CD8-positive, alpha-beta T cell (primary cell): ENCODE measurements at regions of chr21 and their contacts with region 1.

Region 1: DNA sequence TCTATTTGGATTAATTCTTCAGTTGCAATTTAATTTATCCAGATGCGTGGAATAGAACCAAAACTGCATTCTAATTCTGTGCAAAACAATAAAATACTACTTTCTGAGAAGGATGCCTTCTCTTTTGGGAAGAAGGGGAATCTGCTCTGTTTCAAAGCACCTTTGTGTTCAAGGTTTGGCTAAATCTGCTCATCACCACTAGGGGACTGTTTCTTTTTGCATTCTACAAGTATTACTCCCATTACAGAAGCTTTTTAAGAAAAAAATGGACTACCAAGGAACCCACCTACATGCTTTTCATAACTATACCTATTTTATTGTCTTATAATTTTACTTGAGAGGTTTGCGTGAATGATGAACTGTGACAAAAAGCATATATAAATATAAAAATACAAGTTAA is 18.2 kb downstream of the MRPS6 start:
- DNase-seq: peak in 2 of 9 experiments; percentile 17 to 26
- ATAC-seq: no peak
- H3K4me3 ChIP-seq: no peak overlapping the region
- H3K4me3 Mint-ChIP-seq: no peak overlapping the region
- H3K27ac ChIP-seq: no peak overlapping the region
- H3K27ac Mint-ChIP-seq: peak overlapping the region; percentile 4
- H3K4me1 ChIP-seq: peaks cover 61% of the 10 kb centered on the region
- H3K4me1 Mint-ChIP-seq: peaks cover 63% of the 10 kb centered on the region
- H3K27me3 ChIP-seq: no peaks in the 10 kb centered on the region
- H3K27me3 Mint-ChIP-seq: no peaks in the 10 kb centered on the region
- CTCF ChIP-seq: peak; percentile 47

Region 2: DNA sequence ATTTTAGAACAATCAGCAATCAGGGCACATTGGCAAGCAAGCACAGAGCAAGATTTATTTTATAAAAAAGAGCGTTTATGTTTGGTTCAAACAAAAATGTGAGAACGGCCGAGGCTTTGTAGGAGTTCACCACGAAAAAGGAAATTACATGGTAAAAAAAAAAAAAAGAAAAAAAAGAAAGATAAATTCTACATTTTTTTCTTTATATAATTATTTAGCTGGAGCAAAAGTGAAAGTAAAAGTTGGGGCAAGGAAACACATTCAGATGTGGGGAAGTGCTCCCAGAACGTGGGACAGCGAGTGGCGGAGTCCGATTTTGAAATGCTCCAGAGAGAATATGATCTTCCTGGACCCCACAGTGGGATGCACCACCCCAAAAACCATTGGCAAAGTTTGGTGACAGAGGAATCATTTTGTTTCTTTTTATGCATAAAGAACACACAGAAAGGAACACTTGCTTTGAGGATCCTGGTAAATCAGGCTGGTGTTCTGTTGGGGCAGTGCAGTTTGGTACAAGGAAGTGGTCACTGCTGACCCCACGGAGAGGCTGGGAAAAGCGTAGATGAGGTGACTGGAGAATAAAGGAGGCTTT is 159.7 kb before region 1 on chr21:
- CTCF ChIA-PET with region 1: interaction called, 4 read pairs
- POLR2A ChIA-PET with region 1: interaction called, 10 read pairs
- intact Hi-C with region 1: no loop called
- DNase-seq: peak in 2 of 9 experiments; percentile 27 to 34
- ATAC-seq: peak; percentile 26
- H3K4me3 ChIP-seq: peak overlapping the region; percentile 70 to 85
- H3K4me3 Mint-ChIP-seq: peak overlapping the region; percentile 94
- H3K27ac ChIP-seq: peak overlapping the region; percentile 85 to 90
- H3K27ac Mint-ChIP-seq: peak overlapping the region; percentile 99
- H3K4me1 ChIP-seq: peaks cover 42% of the 10 kb centered on the region
- H3K4me1 Mint-ChIP-seq: peaks cover 46% of the 10 kb centered on the region
- H3K27me3 ChIP-seq: no peaks in the 10 kb centered on the region
- H3K27me3 Mint-ChIP-seq: no peaks in the 10 kb centered on the region
- CTCF ChIP-seq: no peak

Region 3: DNA sequence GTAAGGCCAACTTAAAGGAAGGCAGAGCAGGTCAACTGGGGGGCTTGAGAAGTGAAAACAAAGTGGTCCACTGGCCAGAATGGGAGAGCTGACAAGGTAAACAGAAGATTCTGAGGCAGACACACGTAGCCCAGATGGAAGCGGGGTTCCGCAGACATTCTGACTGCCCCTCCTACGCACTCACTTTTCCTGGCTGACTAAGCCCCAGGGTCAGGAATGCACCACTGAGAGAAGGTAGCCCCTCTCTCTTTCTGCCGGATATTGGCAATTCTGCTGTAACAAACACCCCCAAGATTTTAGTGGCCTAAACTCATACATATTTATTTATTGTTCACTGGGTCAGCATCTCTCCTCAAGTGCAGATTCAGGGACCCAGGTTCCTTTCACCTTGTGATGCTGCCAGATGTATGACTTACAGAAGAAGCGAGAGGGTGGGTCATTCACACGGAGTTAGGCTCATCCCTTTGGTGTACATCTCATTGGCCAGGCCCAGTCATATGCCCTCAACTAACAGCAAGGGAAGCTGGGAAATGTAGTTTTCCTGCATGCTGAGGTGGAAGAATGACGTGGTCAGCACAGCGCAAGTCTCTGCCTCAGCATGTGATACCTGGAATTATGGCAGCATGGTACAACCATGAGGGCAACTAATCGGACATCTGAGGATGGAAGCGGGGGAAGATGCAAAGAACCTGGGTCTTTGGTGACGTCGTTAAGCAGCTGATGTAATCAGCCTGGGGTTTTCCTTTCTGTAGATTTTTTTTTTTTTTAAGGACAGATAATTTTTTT is 61.7 kb before region 1 on chr21:
- CTCF ChIA-PET with region 1: no interaction called
- POLR2A ChIA-PET with region 1: no interaction called
- intact Hi-C with region 1: loop called in 1 of 2 experiments (anchors 10 kb)
- DNase-seq: peak in 5 of 9 experiments; percentile 18 to 75 (median 28)
- ATAC-seq: peak; percentile 77
- H3K4me3 ChIP-seq: no peak overlapping the region
- H3K4me3 Mint-ChIP-seq: no peak overlapping the region
- H3K27ac ChIP-seq: no peak overlapping the region
- H3K27ac Mint-ChIP-seq: peak overlapping the region; percentile 79
- H3K4me1 ChIP-seq: no peaks in the 10 kb centered on the region
- H3K4me1 Mint-ChIP-seq: peaks cover 5% of the 10 kb centered on the region
- H3K27me3 ChIP-seq: no peaks in the 10 kb centered on the region
- H3K27me3 Mint-ChIP-seq: no peaks in the 10 kb centered on the region
- CTCF ChIP-seq: no peak

Region 4: GRCh38 chr21:34166468-34166867 is 74.9 kb after region 1 on chr21:
- CTCF ChIA-PET with region 1: no interaction called
- POLR2A ChIA-PET with region 1: no interaction called
- intact Hi-C with region 1: no loop called
- DNase-seq: no peak
- ATAC-seq: no peak
- H3K4me3 ChIP-seq: peak overlapping the region in 1 of 2 experiments; percentile 9
- H3K4me3 Mint-ChIP-seq: no peak overlapping the region
- H3K27ac ChIP-seq: no peak overlapping the region
- H3K27ac Mint-ChIP-seq: no peak overlapping the region
- H3K4me1 ChIP-seq: no peaks in the 10 kb centered on the region
- H3K4me1 Mint-ChIP-seq: no peaks in the 10 kb centered on the region
- H3K27me3 ChIP-seq: no peaks in the 10 kb centered on the region
- H3K27me3 Mint-ChIP-seq: no peaks in the 10 kb centered on the region
- CTCF ChIP-seq: no peak

Region 5: GRCh38 chr21:34187935-34188334 is 96.3 kb after region 1 on chr21:
- CTCF ChIA-PET with region 1: no interaction called
- POLR2A ChIA-PET with region 1: no interaction called
- intact Hi-C with region 1: loop called in 1 of 2 experiments (anchors 5 kb)
- DNase-seq: no peak
- ATAC-seq: no peak
- H3K4me3 ChIP-seq: no peak overlapping the region
- H3K4me3 Mint-ChIP-seq: no peak overlapping the region
- H3K27ac ChIP-seq: no peak overlapping the region
- H3K27ac Mint-ChIP-seq: no peak overlapping the region
- H3K4me1 ChIP-seq: peaks cover 4% of the 10 kb centered on the region
- H3K4me1 Mint-ChIP-seq: peaks cover 16% of the 10 kb centered on the region
- H3K27me3 ChIP-seq: no peaks in the 10 kb centered on the region
- H3K27me3 Mint-ChIP-seq: no peaks in the 10 kb centered on the region
- CTCF ChIP-seq: no peak